K562 (cell line): ENCODE measurements at regions of chr9 and their contacts with region 1.

Region 1: DNA sequence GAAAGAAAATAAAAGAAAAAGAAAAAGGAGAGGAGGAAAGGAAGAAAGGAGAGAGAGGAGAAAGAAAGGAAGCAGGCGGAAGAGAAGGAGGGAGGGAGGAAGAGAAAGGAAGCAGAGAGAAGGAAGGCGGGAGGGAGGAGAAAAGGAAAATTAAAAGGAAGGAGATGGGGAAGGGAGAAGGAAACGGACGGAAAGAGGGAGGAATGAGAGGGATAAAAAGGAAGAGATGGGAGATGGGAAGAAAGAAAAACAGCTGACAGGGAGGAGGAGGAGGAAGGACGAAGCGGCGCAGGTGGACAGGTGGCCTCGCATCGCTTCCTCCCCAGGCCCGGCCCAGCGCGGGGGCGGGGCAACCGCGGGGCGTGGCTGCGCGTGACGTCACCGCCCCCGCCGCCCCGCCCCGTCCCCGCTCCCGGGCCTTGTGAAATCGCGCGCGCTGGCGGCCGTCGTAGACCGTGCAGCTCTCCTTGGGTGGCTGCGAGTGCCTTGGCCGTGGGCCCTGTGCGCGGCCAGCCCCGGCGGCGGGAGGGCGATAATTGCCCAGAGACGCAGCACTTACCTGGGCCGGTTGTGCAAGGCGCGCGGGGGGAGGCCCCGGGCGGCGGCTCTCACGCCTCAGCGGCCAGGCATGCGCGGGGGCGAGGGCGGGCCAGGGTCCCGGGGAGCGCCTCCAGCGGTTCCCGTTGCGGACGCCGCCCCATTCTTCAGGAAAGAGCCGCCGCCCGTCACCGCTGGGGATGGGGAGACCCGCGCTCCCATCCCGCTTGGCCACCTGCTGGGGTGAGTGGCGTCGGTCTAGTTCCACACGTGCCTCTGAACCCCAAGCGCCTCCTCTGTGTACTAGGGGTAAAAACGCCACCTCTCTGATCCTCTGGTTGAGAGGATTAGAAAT is 49.6 kb upstream of the FOXE1 start:
- DNase-seq: peak; percentile 81 to 97 (median 96)
- ATAC-seq: peak; percentile 98
- H3K4me3 ChIP-seq: peak overlapping the region; percentile 49
- H3K27ac ChIP-seq: no peak overlapping the region
- H3K4me1 ChIP-seq: peaks cover 2 to 10% of the 10 kb centered on the region in 2 experiments; a peak in 3 of 5 replicates
- H3K27me3 ChIP-seq: peaks cover 3 to 8% of the 10 kb centered on the region in 2 experiments; a peak in 3 of 5 replicates
- CTCF ChIP-seq: peak in 2 of 3 experiments; percentile 9 to 18; a peak in 2 of 6 replicates
- EP300 ChIP-seq: no peak
- POLR2A ChIP-seq: no peak
- RAD21 ChIP-seq: peak in 1 of 2 experiments; percentile 35; a peak in 3 of 4 replicates

Region 2: DNA sequence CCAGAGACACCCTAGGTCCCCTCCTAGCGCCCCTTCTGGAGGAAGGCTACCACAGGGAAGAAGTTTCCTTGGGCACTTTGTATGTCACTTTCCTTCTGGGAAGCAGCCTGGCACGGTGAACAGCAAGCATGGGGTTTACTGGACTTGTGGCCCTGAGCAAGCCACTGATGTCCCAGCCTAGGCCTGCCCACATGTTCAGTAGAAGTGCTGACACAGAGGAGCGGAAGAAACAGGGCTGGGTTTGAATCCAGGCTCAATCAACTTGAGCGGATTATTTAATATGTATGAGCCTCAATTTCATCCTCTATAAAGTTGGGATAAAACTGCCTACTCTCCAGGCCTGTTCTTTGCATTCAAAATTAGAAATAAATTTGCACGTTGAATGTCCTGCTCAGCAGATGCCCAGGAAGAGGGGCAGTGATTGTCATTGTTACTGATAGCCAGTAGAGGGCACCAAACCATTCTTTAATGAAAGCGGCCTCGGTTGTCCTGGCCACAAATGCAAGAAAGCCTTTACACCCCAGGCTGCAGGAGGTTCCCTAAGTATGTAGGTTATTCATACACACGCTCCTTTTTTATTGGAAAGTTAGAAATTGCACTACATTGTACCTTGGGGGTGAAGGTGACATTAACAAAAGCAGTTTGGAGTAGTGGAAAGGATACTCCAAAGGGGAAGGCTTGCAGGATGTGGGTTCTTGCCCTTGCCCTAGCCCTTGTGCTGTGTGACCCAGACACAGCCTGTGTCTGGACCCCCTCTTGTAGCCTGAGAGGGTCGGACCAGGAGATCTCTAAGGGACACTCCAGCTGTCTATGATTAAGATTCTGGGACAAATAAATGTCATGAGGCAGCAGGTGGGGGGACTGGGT is 92.8 kb before region 1 on chr9:
- CTCF ChIA-PET with region 1: interaction called, 9 read pairs
- POLR2A ChIA-PET with region 1: no interaction called
- in situ Hi-C with region 1: no loop called
- intact Hi-C with region 1: loop called (anchors 10 kb)
- DNase-seq: peak; percentile 75 to 80 (median 78)
- ATAC-seq: peak; percentile 95
- H3K4me3 ChIP-seq: no peak overlapping the region
- H3K27ac ChIP-seq: no peak overlapping the region
- H3K4me1 ChIP-seq: peaks cover 0 to 7% of the 10 kb centered on the region in 2 experiments; a peak in 3 of 5 replicates
- H3K27me3 ChIP-seq: peaks cover 0 to 5% of the 10 kb centered on the region in 2 experiments; a peak in 1 of 5 replicates
- CTCF ChIP-seq: peak; percentile 75 to 87 (median 85)
- EP300 ChIP-seq: no peak
- POLR2A ChIP-seq: no peak
- RAD21 ChIP-seq: peak; percentile 84 to 92

Region 3: DNA sequence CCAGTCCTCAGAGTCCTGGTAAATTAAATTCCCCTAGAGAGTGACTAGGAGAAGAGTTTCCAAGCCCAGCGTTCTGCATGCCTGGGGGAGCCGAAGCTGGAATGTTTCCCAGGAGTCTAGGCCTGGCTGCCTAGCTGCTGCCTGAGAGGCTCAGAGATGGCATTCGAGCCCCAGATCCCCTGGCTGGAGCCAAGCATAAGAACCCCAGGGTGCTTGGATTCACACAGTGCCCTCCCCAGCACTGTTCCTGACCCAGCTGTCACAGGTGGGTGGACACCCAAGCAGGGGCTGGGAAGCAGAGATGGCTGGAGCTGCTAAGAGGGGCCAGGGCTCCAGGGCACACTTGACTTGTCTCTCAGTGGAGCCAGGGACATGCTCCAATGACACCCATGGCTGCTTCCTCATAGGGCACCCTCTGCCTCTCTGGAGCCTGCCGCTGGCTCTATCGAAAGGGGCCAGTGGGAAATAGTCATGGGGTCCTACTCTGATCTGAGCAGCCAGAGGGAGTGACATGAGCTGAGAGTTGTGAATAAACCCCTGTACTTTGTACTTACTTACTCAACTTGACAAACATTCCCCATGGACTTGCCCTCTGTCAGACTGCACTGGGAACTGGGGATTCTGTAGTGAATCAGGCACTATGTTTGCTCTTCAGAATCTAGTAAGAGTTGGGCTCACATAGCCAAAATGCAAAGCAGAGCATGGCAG is 43.7 kb before region 1 on chr9:
- CTCF ChIA-PET with region 1: no interaction called
- POLR2A ChIA-PET with region 1: no interaction called
- in situ Hi-C with region 1: no loop called
- intact Hi-C with region 1: no loop called
- DNase-seq: no peak
- ATAC-seq: no peak
- H3K4me3 ChIP-seq: no peak overlapping the region
- H3K27ac ChIP-seq: no peak overlapping the region
- H3K4me1 ChIP-seq: no peaks in the 10 kb centered on the region; a peak in 1 of 5 replicates
- H3K27me3 ChIP-seq: peaks cover 9 to 41% of the 10 kb centered on the region in 2 experiments
- CTCF ChIP-seq: no peak
- EP300 ChIP-seq: no peak
- POLR2A ChIP-seq: no peak
- RAD21 ChIP-seq: no peak

Region 4: DNA sequence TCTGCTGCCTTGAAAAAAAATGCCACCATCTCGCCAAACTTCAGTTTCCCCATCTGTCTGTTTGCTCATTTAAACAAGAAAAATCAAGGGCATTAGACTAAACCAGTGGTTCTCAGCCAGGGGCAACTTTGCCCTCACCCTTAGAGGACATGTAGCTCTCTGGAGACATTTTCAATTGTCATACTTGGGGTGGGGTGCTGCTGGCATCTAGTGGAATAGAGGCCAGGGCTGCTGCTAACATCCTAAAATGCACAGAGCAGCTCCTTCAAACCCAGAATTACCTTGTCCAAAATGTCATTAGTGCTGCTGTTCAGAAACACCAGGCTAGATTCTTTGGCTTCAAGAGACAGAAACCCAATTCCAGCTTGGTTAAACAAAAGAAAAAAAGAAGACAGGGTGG is 21.5 kb before region 1 on chr9:
- CTCF ChIA-PET with region 1: no interaction called
- POLR2A ChIA-PET with region 1: no interaction called
- in situ Hi-C with region 1: no loop called
- intact Hi-C with region 1: loop called (anchors 2 kb)
- DNase-seq: no peak
- ATAC-seq: no peak
- H3K4me3 ChIP-seq: no peak overlapping the region
- H3K27ac ChIP-seq: no peak overlapping the region
- H3K4me1 ChIP-seq: no peaks in the 10 kb centered on the region
- H3K27me3 ChIP-seq: peaks cover 5 to 8% of the 10 kb centered on the region in 2 experiments; a peak in 3 of 5 replicates
- CTCF ChIP-seq: no peak
- EP300 ChIP-seq: no peak
- POLR2A ChIP-seq: no peak
- RAD21 ChIP-seq: no peak